GM10248 (cell line): ENCODE measurements at regions of chr4 and their contacts with region 1.

Region 1: DNA sequence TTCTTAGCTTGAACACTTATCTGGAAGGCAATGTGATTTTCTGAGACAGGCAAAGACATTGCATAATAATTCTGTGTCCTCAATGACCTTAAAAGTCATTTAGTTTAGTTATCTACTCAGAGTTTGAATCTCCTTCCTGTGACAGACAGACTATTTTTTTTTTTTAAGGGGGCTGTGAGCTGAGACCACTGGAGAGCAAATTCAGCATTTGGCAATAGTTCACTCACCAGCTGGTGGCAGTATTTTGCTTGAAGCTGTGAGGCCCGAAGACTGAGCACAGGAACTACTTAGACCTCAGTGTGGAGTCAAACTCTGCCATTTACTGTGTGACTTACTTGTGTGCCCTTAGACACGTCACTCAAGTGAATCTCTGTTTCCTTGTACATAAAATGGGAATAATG is 22.9 kb upstream of the CPE start:
- DNase-seq: no peak
- CTCF ChIP-seq: peak; percentile 29

Region 2: DNA sequence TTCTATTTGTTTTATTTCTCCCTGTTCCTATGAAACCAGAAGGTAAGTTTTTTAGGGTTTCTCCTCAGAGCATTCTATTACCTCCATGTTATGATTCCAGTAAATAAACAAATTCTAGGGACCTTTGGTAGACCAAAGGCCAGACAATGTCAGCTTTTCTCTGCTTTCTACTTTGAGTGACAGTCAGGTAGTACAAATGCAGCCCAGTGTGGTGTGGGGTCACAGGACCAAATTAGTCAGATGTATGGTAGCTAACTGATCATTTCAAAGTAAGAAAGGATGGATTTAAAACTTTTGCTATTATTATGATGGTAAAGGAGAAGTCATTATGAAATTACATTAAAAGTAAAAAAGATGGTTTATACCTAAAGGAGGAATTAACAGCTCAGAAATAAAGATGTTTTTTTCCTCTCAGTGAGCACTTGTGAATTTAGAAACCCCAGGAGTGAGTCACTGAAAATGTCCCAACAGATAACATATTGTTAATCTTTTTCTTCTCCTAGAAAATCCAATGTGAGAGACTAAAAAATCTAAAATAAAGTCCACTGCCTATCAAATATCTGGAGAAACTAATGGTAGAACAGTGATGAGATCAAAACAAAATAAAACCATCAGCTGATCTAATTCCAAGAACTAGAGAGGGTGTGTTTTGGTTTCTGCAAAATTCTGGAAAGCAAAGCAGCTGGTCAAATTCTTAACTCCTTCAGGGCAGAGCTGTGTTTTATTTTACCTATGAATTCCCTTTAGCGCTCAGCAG is 165.1 kb before region 1 on chr4:
- CTCF ChIA-PET with region 1: no interaction called
- POLR2A ChIA-PET with region 1: no interaction called
- DNase-seq: no peak
- CTCF ChIP-seq: no peak

Region 3: DNA sequence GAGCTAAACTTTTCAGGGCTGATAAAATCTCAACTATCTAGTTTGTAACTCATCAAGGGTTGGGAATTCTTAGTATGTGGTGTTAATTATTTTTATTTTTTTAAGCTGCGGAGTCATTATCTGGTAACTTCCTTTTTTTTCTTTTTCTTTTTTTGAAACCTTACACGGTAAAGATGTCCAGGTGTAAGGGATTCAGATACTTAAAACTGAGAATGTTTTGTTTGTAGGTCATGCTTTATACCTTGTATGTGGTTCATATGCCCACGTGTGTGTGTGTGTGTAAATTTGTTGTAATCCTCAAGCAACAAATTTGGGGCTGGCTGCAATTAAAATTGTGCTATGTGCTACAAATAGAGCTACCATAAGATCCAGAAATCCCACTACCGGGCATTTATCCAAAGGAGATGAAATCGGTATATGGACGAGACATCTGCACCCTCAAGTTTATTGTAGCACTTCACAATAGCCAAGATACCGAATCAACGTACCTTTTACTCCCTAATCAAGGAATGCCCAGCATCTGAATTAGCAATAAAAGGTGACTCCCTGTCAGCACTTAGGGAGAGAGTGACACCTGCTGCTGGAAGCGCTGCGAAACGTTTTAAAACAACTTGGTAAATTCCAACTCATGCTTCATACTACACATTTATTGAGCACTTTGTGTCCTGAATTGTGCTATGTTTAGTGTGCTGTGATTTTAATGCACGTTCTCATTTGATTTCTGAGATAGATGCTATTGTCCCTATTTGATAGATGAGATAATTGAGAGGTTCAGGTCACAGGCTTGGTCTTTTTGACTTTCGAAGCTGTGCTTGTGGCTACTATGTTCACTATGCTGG is 12.3 kb before region 1 on chr4:
- CTCF ChIA-PET with region 1: interaction called, 15 read pairs
- POLR2A ChIA-PET with region 1: interaction called, 3 read pairs
- DNase-seq: no peak
- CTCF ChIP-seq: peak; percentile 19